Caco-2 (cell line): ENCODE measurements at regions of chr18 and their contacts with region 1.

Region 1: GRCh38 chr18:62262061-62262460 is 63.0 kb upstream of the TNFRSF11A start:
- DNase-seq: peak in 1 of 2 experiments; percentile 1
- H3K4me3 ChIP-seq: no peak overlapping the region
- H3K4me3 Mint-ChIP-seq: no peak overlapping the region
- H3K27ac Mint-ChIP-seq: no peak overlapping the region
- H3K4me1 ChIP-seq: no peaks in the 10 kb centered on the region
- H3K4me1 Mint-ChIP-seq: peaks cover 6% of the 10 kb centered on the region
- H3K27me3 ChIP-seq: no peaks in the 10 kb centered on the region
- H3K27me3 Mint-ChIP-seq: no peaks in the 10 kb centered on the region
- CTCF ChIP-seq: no peak

Region 2: DNA sequence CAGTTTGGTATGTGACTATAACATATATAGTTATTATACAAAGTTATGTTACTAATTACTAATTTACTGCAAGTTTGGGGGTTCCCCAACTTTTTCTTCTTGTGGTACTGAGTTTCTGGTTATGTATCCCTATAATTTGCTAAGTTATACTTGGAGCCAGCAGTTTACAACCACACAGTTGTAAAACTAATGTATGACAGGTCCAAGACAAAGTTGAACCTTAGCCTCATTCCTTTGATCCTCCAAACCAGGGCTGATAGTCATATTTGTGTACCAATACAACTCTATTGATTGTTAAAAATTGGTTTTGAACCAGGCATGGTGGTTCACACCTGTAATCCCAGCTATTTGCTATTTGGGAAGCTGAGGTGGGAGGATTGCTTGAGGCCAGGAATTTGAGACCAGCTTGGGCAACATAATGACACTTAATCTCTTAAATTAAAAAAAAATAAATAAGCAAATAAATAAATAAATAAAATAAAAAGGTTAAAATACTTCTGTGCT is 50.7 kb before region 1 on chr18:
- CTCF ChIA-PET with region 1: no interaction called
- POLR2A ChIA-PET with region 1: no interaction called
- intact Hi-C with region 1: no loop called
- DNase-seq: no peak
- H3K4me3 ChIP-seq: no peak overlapping the region
- H3K4me3 Mint-ChIP-seq: no peak overlapping the region
- H3K27ac Mint-ChIP-seq: no peak overlapping the region
- H3K4me1 ChIP-seq: no peaks in the 10 kb centered on the region
- H3K4me1 Mint-ChIP-seq: peaks cover 5% of the 10 kb centered on the region
- H3K27me3 ChIP-seq: no peaks in the 10 kb centered on the region
- H3K27me3 Mint-ChIP-seq: no peaks in the 10 kb centered on the region
- CTCF ChIP-seq: no peak

Region 3: DNA sequence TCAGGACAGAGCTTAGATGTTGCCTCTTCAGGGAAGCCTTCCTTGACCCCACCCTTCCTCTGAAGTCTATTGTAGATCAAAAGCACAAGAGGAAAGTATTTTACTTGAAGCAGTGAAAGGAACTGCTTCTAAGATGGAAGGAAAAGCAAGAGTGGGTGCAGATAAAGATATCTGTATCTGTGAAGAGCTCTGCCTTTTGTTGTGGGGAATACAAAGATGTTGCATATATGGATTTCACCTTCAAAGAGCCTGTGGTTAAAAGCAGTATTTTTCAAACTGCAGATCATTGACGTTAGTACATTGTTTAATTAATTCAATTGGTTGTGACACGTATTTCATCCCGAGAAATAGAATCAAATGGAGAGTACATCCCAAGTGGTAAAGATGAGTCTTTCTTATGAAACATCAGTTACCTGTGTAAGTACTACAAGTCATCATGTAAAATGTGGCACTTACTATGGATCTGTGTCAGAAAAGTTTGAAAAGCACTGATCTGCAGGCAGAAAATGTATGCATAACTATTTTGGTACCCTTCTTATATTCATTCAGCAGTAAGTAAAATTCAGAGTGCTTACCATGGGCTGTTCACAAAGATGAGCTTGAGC is 38.4 kb after region 1 on chr18:
- CTCF ChIA-PET with region 1: no interaction called
- POLR2A ChIA-PET with region 1: no interaction called
- intact Hi-C with region 1: no loop called
- DNase-seq: no peak
- H3K4me3 ChIP-seq: no peak overlapping the region
- H3K4me3 Mint-ChIP-seq: no peak overlapping the region
- H3K27ac Mint-ChIP-seq: no peak overlapping the region
- H3K4me1 ChIP-seq: no peaks in the 10 kb centered on the region
- H3K4me1 Mint-ChIP-seq: no peaks in the 10 kb centered on the region
- H3K27me3 ChIP-seq: no peaks in the 10 kb centered on the region
- H3K27me3 Mint-ChIP-seq: no peaks in the 10 kb centered on the region
- CTCF ChIP-seq: no peak

Region 4: GRCh38 chr18:62399781-62400308 is 137.8 kb after region 1 on chr18:
- CTCF ChIA-PET with region 1: no interaction called
- POLR2A ChIA-PET with region 1: no interaction called
- intact Hi-C with region 1: loop called (anchors 1 kb)
- DNase-seq: peak; percentile 21 to 35
- H3K4me3 ChIP-seq: no peak overlapping the region
- H3K4me3 Mint-ChIP-seq: no peak overlapping the region
- H3K27ac Mint-ChIP-seq: no peak overlapping the region
- H3K4me1 ChIP-seq: no peaks in the 10 kb centered on the region
- H3K4me1 Mint-ChIP-seq: no peaks in the 10 kb centered on the region
- H3K27me3 ChIP-seq: no peaks in the 10 kb centered on the region
- H3K27me3 Mint-ChIP-seq: no peaks in the 10 kb centered on the region
- CTCF ChIP-seq: peak in 1 of 2 experiments; percentile 39